CD4-positive, alpha-beta memory T cell (primary cell): ENCODE measurements at regions of chr6 and their contacts with region 1.

Region 1: DNA sequence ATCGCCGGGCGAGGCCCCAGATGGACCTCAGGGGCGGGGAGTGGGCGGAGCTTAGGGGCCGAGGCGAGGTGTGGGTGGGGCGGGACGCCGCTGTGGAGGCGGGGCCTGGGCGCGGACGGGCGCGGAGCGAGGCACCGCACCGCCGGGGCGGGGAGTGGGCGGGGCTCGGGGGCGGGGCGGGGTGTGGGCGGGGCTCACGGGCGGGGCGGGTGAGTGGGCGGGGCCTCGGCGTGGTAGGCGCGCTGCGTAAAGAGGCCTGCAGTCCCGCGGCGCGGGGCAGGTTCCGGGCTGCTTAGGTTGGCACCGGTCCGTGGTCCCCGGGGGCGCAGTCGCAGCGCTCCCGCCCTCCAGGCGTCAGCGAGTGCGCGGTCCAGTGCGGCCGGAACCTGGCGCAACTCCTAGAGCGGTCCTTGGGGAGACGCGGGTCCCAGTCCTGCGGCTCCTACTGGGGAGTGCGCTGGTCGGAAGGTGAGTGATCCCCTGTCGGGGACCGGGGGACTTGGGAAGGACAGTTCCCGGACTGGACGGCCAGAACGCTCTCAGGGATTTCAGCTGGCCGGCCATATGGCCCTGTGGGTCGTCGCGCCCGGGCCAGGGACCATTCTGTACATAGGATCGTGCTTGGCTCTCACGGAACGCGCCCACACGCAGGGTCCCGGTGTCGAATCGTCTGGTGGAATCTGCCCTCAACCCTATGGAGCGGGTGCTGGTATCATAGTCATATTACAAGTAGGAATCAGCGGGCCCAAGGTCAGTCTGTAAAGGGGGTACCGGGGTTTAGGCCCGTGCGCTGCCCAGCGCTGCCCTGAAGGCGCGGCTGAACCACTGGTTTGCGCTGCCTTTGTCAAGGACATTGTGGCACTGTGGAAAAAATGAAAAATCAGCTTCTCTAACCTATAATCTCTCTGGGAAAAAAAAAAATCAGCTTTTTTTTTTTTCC is at the start of gene NQO2:
- DNase-seq: peak; percentile 79 to 88 (median 85)
- H3K4me3 ChIP-seq: peak within 1 kb of the TSS; percentile 81 to 92
- H3K4me3 Mint-ChIP-seq: peak within 1 kb of the TSS; percentile 87 to 95 (median 91)
- H3K27ac ChIP-seq: peak within 1 kb of the TSS; percentile 80
- H3K27ac Mint-ChIP-seq: peak within 1 kb of the TSS; percentile 85 to 96 (median 91)
- H3K4me1 ChIP-seq: peaks cover 23% of the 10 kb centered on the region
- H3K4me1 Mint-ChIP-seq: peaks cover 17 to 38% (median 27%) of the 10 kb centered on the region in 4 donors
- H3K27me3 ChIP-seq: no peaks in the 10 kb centered on the region
- H3K27me3 Mint-ChIP-seq: no peaks in the 10 kb centered on the region
- total RNA-seq, gene NQO2: 34.2 to 36.6 TPM

Region 2: GRCh38 chr6:1901556-1901955 is 1098.3 kb before region 1 on chr6:
- CTCF ChIA-PET with region 1: no interaction called
- POLR2A ChIA-PET with region 1: no interaction called
- intact Hi-C with region 1: no loop called
- DNase-seq: no peak
- H3K4me3 ChIP-seq: no peak overlapping the region
- H3K4me3 Mint-ChIP-seq: no peak overlapping the region
- H3K27ac ChIP-seq: no peak overlapping the region
- H3K27ac Mint-ChIP-seq: no peak overlapping the region
- H3K4me1 ChIP-seq: no peaks in the 10 kb centered on the region
- H3K4me1 Mint-ChIP-seq: no peaks in the 10 kb centered on the region
- H3K27me3 ChIP-seq: no peaks in the 10 kb centered on the region
- H3K27me3 Mint-ChIP-seq: no peaks in the 10 kb centered on the region

Region 3: DNA sequence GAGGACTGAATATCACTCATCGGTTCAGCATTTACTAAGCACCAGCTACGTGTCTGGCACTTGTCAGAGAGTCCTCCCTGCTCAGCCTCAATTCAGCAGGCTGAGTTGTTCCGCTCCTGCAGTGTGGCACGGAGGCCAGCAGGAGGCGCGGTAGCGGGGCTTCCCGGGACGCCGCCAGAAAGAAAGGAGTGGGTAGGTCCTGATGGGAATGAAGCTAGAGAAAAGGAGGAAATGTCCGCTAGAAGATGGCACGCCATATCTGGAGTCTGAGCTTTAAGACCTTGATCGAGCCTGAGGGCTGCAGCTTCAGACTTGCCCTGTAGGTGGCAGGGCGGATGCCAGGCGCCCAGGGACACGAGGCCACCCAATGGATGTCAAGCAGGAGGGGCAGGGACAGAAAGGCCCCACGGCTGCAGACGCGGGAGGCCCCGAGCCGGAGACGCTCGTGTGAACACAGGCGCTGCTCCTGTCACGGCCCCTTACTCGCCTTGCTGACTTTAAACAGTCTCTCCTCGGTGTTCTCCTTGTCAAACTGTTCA is 47.3 kb before region 1 on chr6:
- CTCF ChIA-PET with region 1: no interaction called
- POLR2A ChIA-PET with region 1: no interaction called
- intact Hi-C with region 1: no loop called
- DNase-seq: peak; percentile 14 to 43 (median 32)
- H3K4me3 ChIP-seq: no peak overlapping the region
- H3K4me3 Mint-ChIP-seq: peak overlapping the region in 1 of 8 donors; percentile 80
- H3K27ac ChIP-seq: no peak overlapping the region
- H3K27ac Mint-ChIP-seq: peak overlapping the region in 4 of 7 donors; percentile 19 to 90 (median 46)
- H3K4me1 ChIP-seq: peaks cover 3% of the 10 kb centered on the region
- H3K4me1 Mint-ChIP-seq: peaks cover 0 to 7% (median 0%) of the 10 kb centered on the region in 4 donors
- H3K27me3 ChIP-seq: no peaks in the 10 kb centered on the region
- H3K27me3 Mint-ChIP-seq: no peaks in the 10 kb centered on the region

Region 4: DNA sequence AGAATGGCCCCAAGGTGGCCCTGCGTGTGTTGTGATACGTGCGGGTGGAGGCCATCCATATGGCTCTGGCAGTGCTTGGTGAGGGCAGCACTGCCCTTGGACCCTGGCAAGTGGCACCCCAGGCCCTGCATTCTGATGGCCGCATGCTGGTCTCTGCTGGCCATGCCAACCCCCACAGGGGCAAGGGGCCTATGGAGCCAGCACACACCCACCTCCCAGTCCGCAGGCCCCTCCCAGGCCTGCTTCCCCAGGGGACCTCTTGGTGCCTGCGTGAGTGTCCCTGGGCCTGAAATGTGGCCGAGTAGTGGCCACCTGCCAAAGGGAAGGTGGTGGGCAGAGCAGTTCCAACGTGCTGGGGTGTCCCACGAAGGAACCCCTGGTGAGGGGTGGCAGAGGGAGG is 17.4 kb after region 1 on chr6:
- CTCF ChIA-PET with region 1: interaction called, 70 read pairs
- POLR2A ChIA-PET with region 1: interaction called, 94 read pairs
- intact Hi-C with region 1: no loop called
- DNase-seq: no peak
- H3K4me3 ChIP-seq: no peak overlapping the region
- H3K4me3 Mint-ChIP-seq: no peak overlapping the region
- H3K27ac ChIP-seq: no peak overlapping the region
- H3K27ac Mint-ChIP-seq: no peak overlapping the region
- H3K4me1 ChIP-seq: peaks cover 11% of the 10 kb centered on the region
- H3K4me1 Mint-ChIP-seq: peaks cover 6 to 27% (median 12%) of the 10 kb centered on the region in 4 donors
- H3K27me3 ChIP-seq: no peaks in the 10 kb centered on the region
- H3K27me3 Mint-ChIP-seq: no peaks in the 10 kb centered on the region

Region 5: DNA sequence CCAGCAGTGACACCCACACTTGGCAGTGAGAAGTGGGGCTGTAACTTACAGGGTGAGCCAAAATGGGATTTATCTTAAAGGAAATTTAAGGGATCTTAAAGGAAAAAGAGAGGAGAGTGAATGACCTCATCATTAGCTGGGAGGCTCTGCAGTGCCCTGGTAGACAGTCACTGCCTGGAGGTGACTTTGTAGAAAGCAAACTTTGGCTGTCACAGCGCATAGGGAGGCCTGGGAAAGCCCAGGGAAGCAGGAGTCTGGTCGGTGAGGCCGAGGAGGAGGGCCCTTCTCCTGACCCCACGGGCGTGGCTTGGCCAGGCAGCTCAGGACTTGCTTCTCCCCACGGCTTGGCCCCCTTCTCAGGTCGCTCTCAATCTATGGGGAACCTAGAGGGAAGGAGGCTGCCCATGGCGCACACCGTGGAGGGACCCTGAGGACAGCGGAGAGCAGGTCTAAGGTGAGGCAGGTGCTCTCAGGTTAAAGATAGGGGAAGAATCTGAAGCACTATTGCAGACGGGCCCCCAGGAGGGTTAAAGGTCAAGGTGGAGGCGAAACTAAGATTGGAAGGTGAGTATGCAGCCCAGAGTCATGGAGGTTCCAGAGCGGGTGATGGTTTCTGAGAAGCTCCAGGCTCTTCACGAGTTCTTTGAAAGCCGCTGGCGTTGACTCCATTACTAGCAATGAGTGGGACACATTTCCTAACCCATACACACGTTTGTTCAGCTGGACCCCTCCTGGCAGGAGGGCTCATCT is 52.8 kb after region 1 on chr6:
- CTCF ChIA-PET with region 1: interaction called, 152 read pairs
- POLR2A ChIA-PET with region 1: interaction called, 78 read pairs
- intact Hi-C with region 1: loop called (anchors 1 kb)
- DNase-seq: no peak
- H3K4me3 ChIP-seq: peak overlapping the region in 1 of 2 donors; percentile 61
- H3K4me3 Mint-ChIP-seq: peak overlapping the region; percentile 53 to 86 (median 78)
- H3K27ac ChIP-seq: peak overlapping the region; percentile 44
- H3K27ac Mint-ChIP-seq: peak overlapping the region in 6 of 7 donors; percentile 65 to 85 (median 80)
- H3K4me1 ChIP-seq: peaks cover 13% of the 10 kb centered on the region
- H3K4me1 Mint-ChIP-seq: peaks cover 6 to 32% (median 16%) of the 10 kb centered on the region in 4 donors
- H3K27me3 ChIP-seq: no peaks in the 10 kb centered on the region
- H3K27me3 Mint-ChIP-seq: no peaks in the 10 kb centered on the region

Region 6: GRCh38 chr6:3162565-3163247 is 162.8 kb after region 1 on chr6:
- CTCF ChIA-PET with region 1: no interaction called
- POLR2A ChIA-PET with region 1: no interaction called
- intact Hi-C with region 1: loop called (anchors 5 kb)
- DNase-seq: peak; percentile 48 to 72 (median 55)
- H3K4me3 ChIP-seq: peak overlapping the region; percentile 53 to 61
- H3K4me3 Mint-ChIP-seq: peak overlapping the region; percentile 84 to 91 (median 85)
- H3K27ac ChIP-seq: peak overlapping the region; percentile 58
- H3K27ac Mint-ChIP-seq: peak overlapping the region; percentile 81 to 97 (median 87)
- H3K4me1 ChIP-seq: peaks cover 35% of the 10 kb centered on the region
- H3K4me1 Mint-ChIP-seq: peaks cover 27 to 49% (median 33%) of the 10 kb centered on the region in 4 donors
- H3K27me3 ChIP-seq: no peaks in the 10 kb centered on the region
- H3K27me3 Mint-ChIP-seq: peaks cover 0 to under 1% of the 10 kb centered on the region in 2 donors

Region 7: GRCh38 chr6:3258720-3259490 is 259.0 kb after region 1 on chr6 and contains the start of gene PSMG4:
- CTCF ChIA-PET with region 1: no interaction called
- POLR2A ChIA-PET with region 1: interaction called, 3 read pairs
- intact Hi-C with region 1: loop called (anchors 2 kb)
- DNase-seq: peak; percentile 87 to 92 (median 88)
- H3K4me3 ChIP-seq: peak within 1 kb of the TSS; percentile 44 to 67
- H3K4me3 Mint-ChIP-seq: peak within 1 kb of the TSS; percentile 93 to 99 (median 96)
- H3K27ac ChIP-seq: peak within 1 kb of the TSS; percentile 70
- H3K27ac Mint-ChIP-seq: peak within 1 kb of the TSS; percentile 92 to 99 (median 95)
- H3K4me1 ChIP-seq: peaks cover 45% of the 10 kb centered on the region
- H3K4me1 Mint-ChIP-seq: peaks cover 21 to 49% (median 37%) of the 10 kb centered on the region in 4 donors
- H3K27me3 ChIP-seq: no peaks in the 10 kb centered on the region
- H3K27me3 Mint-ChIP-seq: no peaks in the 10 kb centered on the region
- total RNA-seq, gene PSMG4: 41.0 to 41.6 TPM

Region 8: GRCh38 chr6:3414327-3415075 is 414.6 kb after region 1 on chr6:
- CTCF ChIA-PET with region 1: no interaction called
- POLR2A ChIA-PET with region 1: no interaction called
- intact Hi-C with region 1: no loop called
- DNase-seq: peak in 3 of 5 donors; percentile 1 to 14 (median 9)
- H3K4me3 ChIP-seq: no peak overlapping the region
- H3K4me3 Mint-ChIP-seq: no peak overlapping the region
- H3K27ac ChIP-seq: no peak overlapping the region
- H3K27ac Mint-ChIP-seq: peak overlapping the region in 5 of 7 donors; percentile 27 to 66 (median 36)
- H3K4me1 ChIP-seq: peaks cover 11% of the 10 kb centered on the region
- H3K4me1 Mint-ChIP-seq: peaks cover 10 to 18% (median 16%) of the 10 kb centered on the region in 4 donors
- H3K27me3 ChIP-seq: no peaks in the 10 kb centered on the region
- H3K27me3 Mint-ChIP-seq: no peaks in the 10 kb centered on the region